Activated CD4-positive, alpha-beta T cell treated with anti-CD3 and anti-CD28 coated beads, Interleukin-2, amount 10 ng/mL, durations not matched to agents 24 days and 14 days (primary cell): ENCODE measurements at regions of chr1 and their contacts with region 1.

Region 1: GRCh38 chr1:211323156-211324063 is 3.2 kb upstream of the TRAF5 start:
- DNase-seq: peak; percentile 91
- H3K4me3 Mint-ChIP-seq: peak overlapping the region; percentile 15
- H3K27ac Mint-ChIP-seq: peak overlapping the region; percentile 88
- H3K4me1 Mint-ChIP-seq: peaks cover 57% of the 10 kb centered on the region
- H3K27me3 Mint-ChIP-seq: no peaks in the 10 kb centered on the region

Region 2: DNA sequence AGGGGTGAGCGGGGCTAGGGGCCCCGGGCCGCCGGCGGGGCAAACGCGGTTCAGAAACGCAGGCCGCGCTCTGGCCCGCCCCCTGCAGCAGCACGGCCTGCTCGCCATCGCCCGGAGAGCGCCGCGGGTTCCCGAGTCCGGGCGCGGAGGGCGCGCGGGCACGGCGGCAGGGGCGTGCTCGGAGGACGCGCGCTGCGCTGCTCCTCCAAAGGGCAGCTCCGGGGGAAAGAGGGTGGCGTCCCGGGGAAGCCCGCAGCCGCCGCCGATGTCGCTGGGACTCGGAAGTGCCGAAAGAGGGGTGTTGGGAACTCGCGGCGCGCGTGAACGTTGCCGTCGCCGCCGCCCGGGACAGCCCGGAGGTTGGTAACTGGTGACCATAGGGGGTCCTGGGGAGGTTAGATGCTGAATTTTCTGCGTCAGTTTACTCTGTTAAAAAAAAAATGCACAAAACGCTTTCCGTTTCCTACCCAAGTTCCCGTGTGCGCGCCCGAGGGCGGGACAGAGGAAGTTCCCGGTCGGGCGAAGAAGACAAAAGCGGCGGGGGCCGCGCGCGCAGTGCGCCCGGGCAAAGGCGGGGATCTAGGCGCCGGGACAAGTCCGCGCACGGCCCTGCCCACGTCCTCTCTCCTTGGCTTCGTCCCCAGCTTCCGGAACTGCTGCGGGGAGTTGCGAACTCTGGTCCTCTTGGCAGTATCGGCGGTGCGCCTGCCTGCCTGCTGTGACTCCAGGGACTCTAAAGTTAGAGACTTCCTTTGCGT is 994.5 kb before region 1 on chr1 and contains the start of gene HHAT:
- intact Hi-C with region 1: loop called (anchors 5 kb)
- DNase-seq: peak; percentile 91
- H3K4me3 Mint-ChIP-seq: peak within 1 kb of the TSS; percentile 96
- H3K27ac Mint-ChIP-seq: peak within 1 kb of the TSS; percentile 96
- H3K4me1 Mint-ChIP-seq: peaks cover 34% of the 10 kb centered on the region
- H3K27me3 Mint-ChIP-seq: peaks cover 16% of the 10 kb centered on the region
- total RNA-seq, gene HHAT: 0.47 and 0.69 TPM in 2 replicates

Region 3: GRCh38 chr1:211281320-211282022 is 41.9 kb before region 1 on chr1:
- intact Hi-C with region 1: loop called (anchors 2 kb)
- DNase-seq: no peak
- H3K4me3 Mint-ChIP-seq: no peak overlapping the region
- H3K27ac Mint-ChIP-seq: no peak overlapping the region
- H3K4me1 Mint-ChIP-seq: peaks cover 4% of the 10 kb centered on the region
- H3K27me3 Mint-ChIP-seq: no peaks in the 10 kb centered on the region

Region 4: GRCh38 chr1:211352985-211353515 is 29.6 kb after region 1 on chr1:
- intact Hi-C with region 1: loop called (anchors 1 kb)
- DNase-seq: peak; percentile 81
- H3K4me3 Mint-ChIP-seq: peak overlapping the region; percentile 67
- H3K27ac Mint-ChIP-seq: peak overlapping the region; percentile 79
- H3K4me1 Mint-ChIP-seq: peaks cover 50% of the 10 kb centered on the region
- H3K27me3 Mint-ChIP-seq: no peaks in the 10 kb centered on the region

Region 5: GRCh38 chr1:211476200-211476849 is 152.9 kb after region 1 on chr1:
- intact Hi-C with region 1: loop called (anchors 1 kb)
- DNase-seq: peak; percentile 93
- H3K4me3 Mint-ChIP-seq: no peak overlapping the region
- H3K27ac Mint-ChIP-seq: no peak overlapping the region
- H3K4me1 Mint-ChIP-seq: peaks cover 2% of the 10 kb centered on the region
- H3K27me3 Mint-ChIP-seq: peaks cover 22% of the 10 kb centered on the region

Region 6: GRCh38 chr1:211654838-211655787 is 331.7 kb after region 1 on chr1:
- intact Hi-C with region 1: loop called (anchors 1 kb)
- DNase-seq: peak; percentile 94
- H3K4me3 Mint-ChIP-seq: no peak overlapping the region
- H3K27ac Mint-ChIP-seq: no peak overlapping the region
- H3K4me1 Mint-ChIP-seq: peaks cover 6% of the 10 kb centered on the region
- H3K27me3 Mint-ChIP-seq: peaks cover 10% of the 10 kb centered on the region

Region 7: GRCh38 chr1:211761400-211761799 is 438.0 kb after region 1 on chr1:
- intact Hi-C with region 1: no loop called
- DNase-seq: no peak
- H3K4me3 Mint-ChIP-seq: no peak overlapping the region
- H3K27ac Mint-ChIP-seq: no peak overlapping the region
- H3K4me1 Mint-ChIP-seq: no peaks in the 10 kb centered on the region
- H3K27me3 Mint-ChIP-seq: no peaks in the 10 kb centered on the region